ENCODE measurements at regions of chr12 and their contacts with region 1.

Region 1: DNA sequence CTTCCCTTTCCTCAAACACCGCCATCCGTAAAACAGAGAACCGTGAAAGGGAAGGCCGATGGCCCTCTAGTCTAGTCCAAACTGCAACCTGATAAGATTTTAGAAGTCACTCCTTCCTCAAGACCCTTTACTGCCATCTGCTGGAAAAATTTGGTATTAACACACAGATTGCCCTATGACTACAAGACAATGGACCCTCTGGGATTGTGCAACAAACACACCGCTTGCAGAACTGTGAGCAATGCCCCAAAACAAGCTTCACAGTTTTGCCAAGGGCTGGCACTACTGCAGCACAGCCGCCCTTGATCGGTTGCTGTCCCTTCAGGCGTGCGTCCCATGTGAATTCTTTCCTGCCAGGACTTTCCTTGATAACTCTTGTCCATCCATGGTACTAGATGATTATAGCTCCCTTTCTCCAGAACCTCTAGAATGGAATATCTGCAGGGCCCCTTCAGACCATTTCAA is 23.1 kb downstream of the LLPH start:
- DNase-seq: peak; percentile 92
- H3K4me3 ChIP-seq: no peak overlapping the region
- CTCF ChIP-seq: peak; percentile 76

Region 2: GRCh38 chr12:65278576-65279368 is 828.7 kb before region 1 on chr12 and contains the start of gene MSRB3:
- in situ Hi-C with region 1: loop called (anchors 25 kb)
- DNase-seq: peak; percentile 28
- H3K4me3 ChIP-seq: peak within 1 kb of the TSS; percentile 79
- CTCF ChIP-seq: peak; percentile 22

Region 3: GRCh38 chr12:66388517-66388916 is 281.0 kb after region 1 on chr12:
- in situ Hi-C with region 1: no loop called
- DNase-seq: no peak
- H3K4me3 ChIP-seq: no peak overlapping the region
- CTCF ChIP-seq: no peak